GM12878 (cell line): ENCODE measurements at regions of chr9 and their contacts with region 1.

Region 1: DNA sequence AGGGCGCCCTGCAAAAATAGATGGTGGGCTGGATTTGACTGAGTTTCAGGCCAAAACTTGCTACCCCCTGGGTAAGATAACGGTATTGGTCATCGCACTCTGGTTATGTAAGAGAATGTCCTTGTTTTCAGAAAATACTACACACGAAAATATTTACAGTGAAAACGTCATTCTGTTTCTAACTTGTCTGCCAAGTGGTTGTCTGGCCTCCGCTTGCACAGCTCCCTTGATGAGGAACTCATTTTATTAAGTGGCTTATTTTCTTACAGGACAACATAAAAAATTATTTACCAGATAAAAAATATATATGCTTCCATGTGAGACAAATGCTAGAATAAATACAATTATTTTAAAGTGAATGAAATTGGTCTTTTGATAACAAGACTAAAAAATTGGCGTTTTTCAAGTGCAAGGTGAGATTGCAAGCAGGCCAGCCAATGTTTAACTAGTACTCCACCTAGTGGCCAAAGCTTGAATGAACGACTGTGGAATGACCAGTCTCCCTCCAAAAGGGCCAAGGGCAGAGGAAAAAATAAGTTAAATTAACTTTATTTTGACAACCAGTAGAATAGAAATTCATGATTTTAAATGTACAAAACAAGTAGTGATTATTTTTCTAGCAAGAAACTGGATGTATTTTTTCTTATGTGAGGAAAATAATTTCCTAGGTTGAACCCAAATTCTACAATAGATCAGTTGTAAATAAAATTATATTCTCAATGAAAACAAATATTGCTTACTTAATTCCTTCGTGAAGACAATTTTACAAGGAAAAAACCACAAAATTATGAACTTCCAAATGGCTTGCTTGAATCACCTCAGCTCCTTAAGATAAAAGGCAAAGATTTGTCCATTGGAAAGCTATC is 93.2 kb downstream of the ZFAND5 start:
- DNase-seq: no peak
- ATAC-seq: peak; percentile 78
- H3K4me3 ChIP-seq: no peak overlapping the region
- H3K27ac ChIP-seq: no peak overlapping the region
- H3K4me1 ChIP-seq: peaks cover 3% of the 10 kb centered on the region; the same call in 1 of the 2 replicates
- H3K27me3 ChIP-seq: peaks cover 0 to 2% of the 10 kb centered on the region in 2 experiments; a peak in 1 of 4 replicates
- CTCF ChIP-seq: peak; percentile 80 to 82 (median 81)
- EP300 ChIP-seq: no peak
- POLR2A ChIP-seq: no peak
- RAD21 ChIP-seq: peak; percentile 83

Region 2: GRCh38 chr9:71683598-71684235 is 588.1 kb before region 1 on chr9:
- CTCF ChIA-PET with region 1: no interaction called
- POLR2A ChIA-PET with region 1: no interaction called
- RAD21 ChIA-PET with region 1: no interaction called
- SMC1A ChIA-PET with region 1: no interaction called
- in situ Hi-C with region 1: no loop called
- intact Hi-C with region 1: no loop called
- DNase-seq: no peak
- ATAC-seq: no peak
- H3K4me3 ChIP-seq: no peak overlapping the region
- H3K27ac ChIP-seq: no peak overlapping the region
- H3K4me1 ChIP-seq: no peaks in the 10 kb centered on the region
- H3K27me3 ChIP-seq: no peaks in the 10 kb centered on the region
- CTCF ChIP-seq: no peak
- EP300 ChIP-seq: no peak
- POLR2A ChIP-seq: no peak
- RAD21 ChIP-seq: no peak

Region 3: DNA sequence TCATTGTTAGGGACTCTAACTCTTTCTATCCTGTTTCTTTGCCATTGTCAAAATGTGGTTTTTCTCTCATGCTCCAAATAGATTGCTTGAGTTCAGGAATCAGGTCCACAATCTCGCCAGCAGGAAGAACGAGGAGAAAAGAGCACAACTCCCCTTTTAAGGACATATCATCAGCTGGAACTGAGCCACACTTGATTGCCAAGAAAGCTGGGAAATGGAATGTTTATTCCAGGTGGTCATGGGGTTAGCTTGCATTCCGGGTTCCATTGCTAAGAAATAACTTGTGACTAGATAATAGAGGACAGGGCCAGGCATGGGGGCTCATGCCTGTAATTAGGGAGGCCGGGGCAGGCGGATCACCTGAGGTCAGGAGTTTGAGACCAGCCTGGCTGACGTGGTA is 179.0 kb before region 1 on chr9:
- CTCF ChIA-PET with region 1: no interaction called
- POLR2A ChIA-PET with region 1: no interaction called
- RAD21 ChIA-PET with region 1: no interaction called
- SMC1A ChIA-PET with region 1: no interaction called
- in situ Hi-C with region 1: no loop called
- intact Hi-C with region 1: no loop called
- DNase-seq: no peak
- ATAC-seq: no peak
- H3K4me3 ChIP-seq: no peak overlapping the region
- H3K27ac ChIP-seq: no peak overlapping the region
- H3K4me1 ChIP-seq: no peaks in the 10 kb centered on the region
- H3K27me3 ChIP-seq: no peaks in the 10 kb centered on the region
- CTCF ChIP-seq: no peak
- EP300 ChIP-seq: no peak
- POLR2A ChIP-seq: no peak
- RAD21 ChIP-seq: no peak

Region 4: GRCh38 chr9:72154468-72155281 is 117.2 kb before region 1 on chr9:
- CTCF ChIA-PET with region 1: interaction called, 8 read pairs
- POLR2A ChIA-PET with region 1: no interaction called
- RAD21 ChIA-PET with region 1: interaction called, 3 read pairs
- SMC1A ChIA-PET with region 1: interaction called, 11 read pairs
- in situ Hi-C with region 1: no loop called
- intact Hi-C with region 1: loop called (anchors 2 kb)
- DNase-seq: peak; percentile 60
- ATAC-seq: peak; percentile 94
- H3K4me3 ChIP-seq: no peak overlapping the region
- H3K27ac ChIP-seq: no peak overlapping the region
- H3K4me1 ChIP-seq: no peaks in the 10 kb centered on the region; the same call in 1 of the 2 replicates
- H3K27me3 ChIP-seq: peaks cover 0 to under 1% of the 10 kb centered on the region in 2 experiments; a peak in 2 of 4 replicates
- CTCF ChIP-seq: no peak
- EP300 ChIP-seq: peak in 1 of 2 experiments; percentile 55; a peak in 3 of 4 replicates
- POLR2A ChIP-seq: no peak
- RAD21 ChIP-seq: no peak

Region 5: GRCh38 chr9:72193478-72193881 is 78.4 kb before region 1 on chr9:
- CTCF ChIA-PET with region 1: interaction called, 468 read pairs
- POLR2A ChIA-PET with region 1: interaction called, 7 read pairs
- RAD21 ChIA-PET with region 1: interaction called, 7 read pairs
- SMC1A ChIA-PET with region 1: interaction called, 9 read pairs
- in situ Hi-C with region 1: no loop called
- intact Hi-C with region 1: no loop called
- DNase-seq: no peak
- ATAC-seq: peak; percentile 98
- H3K4me3 ChIP-seq: no peak overlapping the region
- H3K27ac ChIP-seq: no peak overlapping the region
- H3K4me1 ChIP-seq: no peaks in the 10 kb centered on the region; the same call in 1 of the 2 replicates
- H3K27me3 ChIP-seq: no peaks in the 10 kb centered on the region
- CTCF ChIP-seq: no peak
- EP300 ChIP-seq: no peak
- POLR2A ChIP-seq: no peak
- RAD21 ChIP-seq: no peak

Region 6: DNA sequence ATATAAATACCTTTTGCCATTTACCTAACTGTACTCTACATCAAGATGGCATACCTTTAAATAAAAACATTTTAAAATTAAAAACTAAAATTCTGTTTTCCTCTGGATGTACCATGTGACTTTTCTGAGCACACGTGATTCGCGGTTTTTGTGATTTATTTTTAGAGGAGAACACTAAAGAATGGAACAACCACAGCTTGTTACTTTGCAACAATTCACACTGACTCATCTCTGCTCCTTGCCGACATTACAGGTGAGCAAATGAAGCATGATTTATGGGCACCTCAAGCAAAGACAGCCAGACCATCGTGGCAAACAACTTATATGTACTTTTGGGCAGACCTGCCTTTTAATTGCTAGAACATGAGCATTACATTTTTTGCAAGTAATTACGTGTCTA is 61.3 kb before region 1 on chr9:
- CTCF ChIA-PET with region 1: interaction called, 468 read pairs
- POLR2A ChIA-PET with region 1: interaction called, 3 read pairs
- RAD21 ChIA-PET with region 1: interaction called, 242 read pairs
- SMC1A ChIA-PET with region 1: interaction called, 446 read pairs
- in situ Hi-C with region 1: no loop called
- intact Hi-C with region 1: no loop called
- DNase-seq: no peak
- ATAC-seq: peak; percentile 80
- H3K4me3 ChIP-seq: no peak overlapping the region
- H3K27ac ChIP-seq: no peak overlapping the region
- H3K4me1 ChIP-seq: peaks cover 2% of the 10 kb centered on the region
- H3K27me3 ChIP-seq: no peaks in the 10 kb centered on the region
- CTCF ChIP-seq: no peak
- EP300 ChIP-seq: peak; percentile 60 to 64; a peak in 3 of 4 replicates
- POLR2A ChIP-seq: no peak
- RAD21 ChIP-seq: no peak

Region 7: GRCh38 chr9:72322259-72322658 is 50.4 kb after region 1 on chr9:
- CTCF ChIA-PET with region 1: no interaction called
- POLR2A ChIA-PET with region 1: no interaction called
- RAD21 ChIA-PET with region 1: no interaction called
- SMC1A ChIA-PET with region 1: no interaction called
- in situ Hi-C with region 1: no loop called
- intact Hi-C with region 1: no loop called
- DNase-seq: no peak
- ATAC-seq: no peak
- H3K4me3 ChIP-seq: no peak overlapping the region
- H3K27ac ChIP-seq: no peak overlapping the region
- H3K4me1 ChIP-seq: no peaks in the 10 kb centered on the region
- H3K27me3 ChIP-seq: no peaks in the 10 kb centered on the region
- CTCF ChIP-seq: no peak
- EP300 ChIP-seq: no peak
- POLR2A ChIP-seq: no peak
- RAD21 ChIP-seq: no peak